ENCODE measurements at regions of chr16 and their contacts with region 1.

Region 1: DNA sequence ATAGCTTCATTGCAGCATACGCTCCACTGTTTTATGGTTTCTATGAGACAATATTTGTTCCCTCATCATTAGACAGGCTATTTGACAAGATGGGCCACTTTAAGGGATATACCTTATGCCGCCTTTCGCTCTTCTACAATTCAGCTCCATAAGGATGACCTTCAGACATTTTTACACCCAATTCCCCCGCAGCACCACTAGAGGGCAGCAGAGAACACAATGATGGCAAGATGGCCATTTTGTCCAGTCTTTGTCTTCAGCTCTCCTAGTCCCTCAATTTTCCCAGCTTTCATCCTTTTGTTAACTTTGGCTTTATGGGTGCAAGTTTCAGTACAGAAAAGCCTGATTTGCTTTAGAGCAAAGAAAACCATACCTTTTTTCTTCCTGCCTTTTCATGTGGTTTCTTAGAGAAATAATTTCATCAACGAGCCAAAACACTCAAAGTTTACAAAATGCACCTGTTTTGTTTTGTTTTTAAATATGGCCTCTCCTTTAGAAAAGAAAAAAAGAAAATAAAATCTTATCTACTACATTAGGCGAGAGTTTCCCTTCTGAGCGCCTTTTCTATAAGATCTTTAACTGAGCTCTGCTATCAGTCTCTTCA is 355.3 kb downstream of the TOX3 start:
- DNase-seq: no peak
- H3K4me3 ChIP-seq: no peak overlapping the region
- H3K27ac ChIP-seq: no peak overlapping the region
- H3K4me1 ChIP-seq: no peaks in the 10 kb centered on the region
- H3K27me3 ChIP-seq: no peaks in the 10 kb centered on the region
- CTCF ChIP-seq: peak; percentile 82 to 94 (median 89)
- POLR2A ChIP-seq: no peak

Region 2: GRCh38 chr16:52247737-52248136 is 56.1 kb after region 1 on chr16:
- intact Hi-C with region 1: no loop called
- DNase-seq: no peak
- H3K4me3 ChIP-seq: no peak overlapping the region
- H3K27ac ChIP-seq: no peak overlapping the region
- H3K4me1 ChIP-seq: no peaks in the 10 kb centered on the region
- H3K27me3 ChIP-seq: no peaks in the 10 kb centered on the region
- CTCF ChIP-seq: no peak
- POLR2A ChIP-seq: no peak

Region 3: DNA sequence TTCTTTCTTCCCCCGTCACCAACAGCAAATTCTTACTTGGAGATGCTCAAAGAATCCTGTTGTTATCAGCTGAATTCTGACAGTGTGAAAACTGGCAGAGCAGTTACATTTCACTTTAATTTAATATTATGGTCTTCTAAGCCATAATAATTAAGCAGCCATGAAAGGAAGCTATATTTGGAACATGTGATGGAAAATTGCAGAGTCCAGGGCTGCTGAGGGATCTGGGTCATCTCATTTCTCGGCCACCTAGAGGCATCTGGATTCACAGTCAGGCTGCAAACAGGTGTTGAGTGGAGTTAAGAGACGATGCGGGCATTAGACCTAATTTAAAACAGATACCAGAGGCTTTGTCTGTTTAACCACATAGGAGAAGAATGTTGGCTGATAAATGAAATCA is 822.7 kb after region 1 on chr16:
- intact Hi-C with region 1: loop called (anchors 10 kb)
- DNase-seq: no peak
- H3K4me3 ChIP-seq: no peak overlapping the region
- H3K27ac ChIP-seq: no peak overlapping the region
- H3K4me1 ChIP-seq: no peaks in the 10 kb centered on the region
- H3K27me3 ChIP-seq: no peaks in the 10 kb centered on the region
- CTCF ChIP-seq: no peak
- POLR2A ChIP-seq: no peak

Measured in vagina (tissue), 2 donors.